Activated CD4-positive, alpha-beta memory T cell treated with anti-CD3 and anti-CD28 coated beads for 36 hours (primary cell): ENCODE measurements at regions of chr1 and their contacts with region 1.

Region 1: DNA sequence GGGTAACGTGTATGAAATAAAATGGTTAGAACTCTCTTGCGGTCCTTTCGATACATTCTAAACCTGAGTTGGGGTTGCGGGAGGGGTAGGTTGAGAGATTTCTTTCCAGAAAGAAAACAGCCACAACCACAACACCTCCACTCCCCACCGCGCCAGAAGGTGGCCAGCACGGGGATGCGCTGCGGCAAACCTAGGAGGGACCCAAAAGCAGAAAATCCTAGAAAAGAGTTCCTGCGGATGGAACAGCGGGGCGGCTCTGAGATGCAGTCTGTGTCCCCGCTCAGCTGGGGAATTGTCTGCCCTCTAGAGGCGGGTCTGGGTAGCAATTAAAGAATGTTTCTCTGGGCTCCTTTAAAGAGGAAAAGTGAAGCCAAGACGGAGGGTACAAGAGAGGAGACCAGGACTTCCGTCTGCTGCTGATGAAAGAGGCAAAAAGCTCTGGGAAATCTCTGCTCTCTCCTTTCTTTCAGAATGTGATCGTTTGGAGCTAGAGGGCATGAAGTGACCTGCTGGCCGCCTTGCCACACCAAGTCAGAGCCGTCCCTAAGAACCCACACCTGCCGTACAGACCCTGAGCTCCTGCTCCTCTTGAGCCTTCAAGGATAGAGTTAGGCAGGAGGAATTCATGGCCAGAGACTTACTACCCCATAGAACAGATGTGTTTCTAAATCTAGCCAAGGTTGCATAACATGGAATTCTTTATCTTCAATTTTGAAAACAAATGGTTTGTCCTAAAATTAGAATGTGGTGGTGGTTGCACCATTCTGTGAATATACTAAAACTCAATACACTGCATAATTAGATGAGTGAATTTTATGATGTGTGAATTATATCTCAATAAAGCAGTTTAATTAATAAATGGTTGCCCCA is 46.5 kb upstream of the COA6 start:
- DNase-seq: peak; percentile 75
- H3K4me3 Mint-ChIP-seq: peak overlapping the region; percentile 72
- H3K27ac Mint-ChIP-seq: no peak overlapping the region
- H3K4me1 Mint-ChIP-seq: peaks cover 16% of the 10 kb centered on the region
- H3K27me3 Mint-ChIP-seq: peaks cover 13% of the 10 kb centered on the region

Region 2: DNA sequence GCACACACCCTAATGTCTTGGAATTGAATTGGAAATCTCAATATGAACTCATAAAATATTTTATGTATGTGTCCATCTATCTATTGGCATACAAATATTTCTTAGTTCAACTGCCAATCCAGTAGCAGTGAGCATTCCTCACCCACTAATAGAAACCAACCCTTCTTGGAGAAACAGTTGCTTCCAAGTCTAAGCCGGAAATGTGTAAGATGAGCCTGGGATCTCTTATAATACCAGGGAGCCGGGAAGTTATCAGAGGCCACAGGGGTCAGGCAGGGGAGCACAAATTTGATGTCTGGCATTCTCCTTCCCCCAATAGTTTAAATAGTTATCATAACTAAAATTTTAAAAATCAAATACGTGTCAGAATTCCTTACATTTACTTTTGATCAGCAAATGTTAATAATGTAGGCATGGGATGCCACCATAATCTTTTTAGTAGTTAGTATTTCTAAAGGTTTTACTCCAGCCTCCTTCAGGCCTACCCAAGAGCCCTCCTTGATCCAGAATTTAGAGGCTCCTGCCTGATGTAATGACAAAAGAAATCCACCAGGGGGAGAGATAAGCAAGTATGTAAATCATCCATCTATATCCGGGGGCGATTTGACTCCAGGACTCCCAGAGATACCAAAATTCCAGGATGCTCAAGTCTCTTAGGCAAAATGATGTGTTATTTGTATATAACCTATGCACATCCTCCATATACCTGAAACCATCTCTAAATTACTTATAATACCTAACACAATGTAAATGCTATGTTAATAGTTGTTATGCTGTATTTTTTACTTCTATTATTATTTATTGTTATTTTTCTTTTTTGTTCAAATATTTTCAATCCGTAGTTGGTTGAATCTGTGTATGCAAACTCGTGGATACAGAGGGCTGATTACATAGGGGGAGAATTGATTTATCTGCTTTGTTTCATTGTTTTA is 172.1 kb before region 1 on chr1:
- CTCF ChIA-PET with region 1: interaction called, 4 read pairs
- POLR2A ChIA-PET with region 1: no interaction called
- intact Hi-C with region 1: loop called (anchors 1 kb)
- DNase-seq: no peak
- H3K4me3 Mint-ChIP-seq: no peak overlapping the region
- H3K27ac Mint-ChIP-seq: no peak overlapping the region
- H3K4me1 Mint-ChIP-seq: peaks cover 7% of the 10 kb centered on the region
- H3K27me3 Mint-ChIP-seq: peaks cover 11% of the 10 kb centered on the region

Region 3: DNA sequence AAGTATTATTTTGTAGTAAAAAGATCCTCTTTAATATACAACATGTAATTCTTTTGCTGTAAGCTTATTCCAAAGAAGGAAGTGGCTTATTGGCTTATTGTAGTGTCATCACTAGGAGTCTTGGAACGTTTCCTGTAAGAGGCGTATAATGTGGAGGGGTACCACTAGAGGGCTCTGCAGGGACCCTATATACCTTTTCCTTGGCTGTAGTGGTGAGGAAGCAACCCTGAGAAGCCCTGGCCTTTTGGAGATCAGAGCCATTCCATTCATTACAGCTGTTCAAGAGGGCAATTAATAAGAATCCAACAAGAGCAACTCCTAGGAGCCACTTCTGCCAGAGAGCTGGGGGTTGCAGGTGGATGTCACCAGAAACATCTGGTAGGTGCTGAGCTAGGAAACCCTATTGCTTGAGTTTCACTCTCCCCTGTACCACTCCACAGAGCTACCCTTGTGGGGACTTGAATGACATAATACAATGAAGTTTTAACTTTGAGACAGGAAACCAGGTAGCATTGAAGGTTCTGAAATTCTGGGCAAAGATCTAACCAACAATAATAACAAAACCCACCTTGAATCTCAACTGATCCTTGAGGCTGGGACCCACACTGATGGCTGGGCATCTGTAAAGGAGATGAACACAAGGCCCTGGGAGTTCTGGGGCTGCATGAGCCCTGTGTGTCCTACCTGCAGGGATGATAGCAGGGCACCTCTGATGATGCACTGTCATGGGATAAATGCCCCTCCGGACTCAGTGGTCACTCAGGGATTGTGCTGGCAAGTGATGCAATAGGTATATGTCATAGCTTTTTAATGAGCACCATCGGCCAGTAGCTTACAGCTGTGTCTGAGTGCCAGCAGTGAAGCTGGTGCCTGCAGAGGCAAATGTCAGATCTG is 113.7 kb before region 1 on chr1:
- CTCF ChIA-PET with region 1: interaction called, 16 read pairs
- POLR2A ChIA-PET with region 1: no interaction called
- intact Hi-C with region 1: loop called (anchors 1 kb)
- DNase-seq: peak; percentile 32
- H3K4me3 Mint-ChIP-seq: no peak overlapping the region
- H3K27ac Mint-ChIP-seq: no peak overlapping the region
- H3K4me1 Mint-ChIP-seq: peaks cover 16% of the 10 kb centered on the region
- H3K27me3 Mint-ChIP-seq: peaks cover 33% of the 10 kb centered on the region

Region 4: GRCh38 chr1:234409328-234409727 is 82.6 kb after region 1 on chr1:
- CTCF ChIA-PET with region 1: interaction called, 14 read pairs
- POLR2A ChIA-PET with region 1: no interaction called
- intact Hi-C with region 1: loop called (anchors 1 kb)
- DNase-seq: peak; percentile 29
- H3K4me3 Mint-ChIP-seq: peak overlapping the region; percentile 45
- H3K27ac Mint-ChIP-seq: peak overlapping the region; percentile 84
- H3K4me1 Mint-ChIP-seq: peaks cover 32% of the 10 kb centered on the region
- H3K27me3 Mint-ChIP-seq: no peaks in the 10 kb centered on the region

Region 5: GRCh38 chr1:234478481-234479309 is 152.0 kb after region 1 on chr1 and contains the start of gene TARBP1:
- CTCF ChIA-PET with region 1: interaction called, 6 read pairs
- POLR2A ChIA-PET with region 1: no interaction called
- intact Hi-C with region 1: loop called (anchors 5 kb)
- DNase-seq: peak; percentile 82
- H3K4me3 Mint-ChIP-seq: peak within 1 kb of the TSS; percentile 80
- H3K27ac Mint-ChIP-seq: peak within 1 kb of the TSS; percentile 65
- H3K4me1 Mint-ChIP-seq: peaks cover 39% of the 10 kb centered on the region
- H3K27me3 Mint-ChIP-seq: peaks cover 14% of the 10 kb centered on the region
- total RNA-seq, gene TARBP1: 28.9 to 30.1 TPM

Region 6: DNA sequence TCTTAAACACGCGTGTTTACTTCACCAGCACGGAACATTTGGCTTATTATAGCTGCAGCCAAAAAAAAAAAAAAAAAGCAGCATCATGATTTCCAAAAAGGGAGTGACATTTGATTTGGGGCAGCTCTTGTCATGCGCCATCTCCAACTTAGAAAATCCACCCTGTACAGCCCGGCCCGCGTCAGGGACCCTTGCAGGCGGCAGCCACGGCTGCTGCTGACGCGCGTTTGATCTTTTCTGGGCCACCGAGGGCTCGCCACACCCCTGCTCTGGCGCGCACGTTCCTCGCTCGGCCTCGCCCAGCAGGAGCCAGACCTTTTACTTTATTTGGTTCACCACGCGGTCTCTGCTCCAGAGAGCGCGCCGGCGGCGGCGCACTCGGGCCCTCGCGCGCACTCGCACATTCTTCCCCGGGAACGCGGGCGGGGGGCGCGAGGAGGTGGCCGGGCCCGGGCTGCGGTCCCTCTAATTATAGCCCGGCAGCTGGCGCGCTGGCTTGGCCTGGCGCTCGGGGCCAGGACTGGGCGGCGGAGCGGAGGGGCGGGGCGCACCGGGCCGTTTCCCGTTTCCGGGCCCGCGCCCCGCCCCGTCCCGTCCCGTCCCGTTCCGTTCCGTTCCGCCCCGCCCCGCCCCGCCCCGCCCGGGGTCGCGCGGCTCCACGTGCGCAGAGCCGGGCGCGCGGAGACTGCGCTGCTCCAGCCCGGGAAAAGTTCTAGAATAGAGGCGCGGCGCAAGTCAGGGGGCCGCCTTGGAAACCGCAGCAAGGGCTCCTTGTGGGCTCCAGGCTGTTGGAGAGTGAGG is 273.1 kb after region 1 on chr1:
- CTCF ChIA-PET with region 1: no interaction called
- POLR2A ChIA-PET with region 1: no interaction called
- intact Hi-C with region 1: loop called (anchors 10 kb)
- DNase-seq: peak; percentile 82
- H3K4me3 Mint-ChIP-seq: peak overlapping the region; percentile 85
- H3K27ac Mint-ChIP-seq: peak overlapping the region; percentile 100
- H3K4me1 Mint-ChIP-seq: peaks cover 54% of the 10 kb centered on the region
- H3K27me3 Mint-ChIP-seq: no peaks in the 10 kb centered on the region